ENCODE measurements at regions of chr6 and their contacts with region 1.

Region 1: GRCh38 chr6:36765594-36766398 is 68.2 kb downstream of the RAB44 start:
- DNase-seq: peak; percentile 61 to 95
- H3K4me3 ChIP-seq: no peak overlapping the region
- H3K27ac ChIP-seq: no peak overlapping the region
- H3K4me1 ChIP-seq: peaks cover 0 to 10% (median 1%) of the 10 kb centered on the region in 4 experiments; a peak in 4 of 7 replicates
- H3K27me3 ChIP-seq: no peaks in the 10 kb centered on the region
- CTCF ChIP-seq: peak; percentile 94 to 97 (median 96)
- EP300 ChIP-seq: no peak
- POLR2A ChIP-seq: no peak
- RAD21 ChIP-seq: peak; percentile 98 to 99

Region 2: GRCh38 chr6:36788768-36789167 is 23.0 kb after region 1 on chr6:
- CTCF ChIA-PET with region 1: interaction called, 231 read pairs
- POLR2A ChIA-PET with region 1: interaction called, 4 read pairs
- DNase-seq: no peak
- H3K4me3 ChIP-seq: no peak overlapping the region
- H3K27ac ChIP-seq: no peak overlapping the region
- H3K4me1 ChIP-seq: peaks cover 8 to 35% (median 19%) of the 10 kb centered on the region in 4 experiments
- H3K27me3 ChIP-seq: no peaks in the 10 kb centered on the region
- CTCF ChIP-seq: no peak
- EP300 ChIP-seq: no peak
- POLR2A ChIP-seq: no peak
- RAD21 ChIP-seq: no peak

Region 3: GRCh38 chr6:36809941-36810803 is 44.4 kb after region 1 on chr6:
- CTCF ChIA-PET with region 1: interaction called, 47 read pairs
- POLR2A ChIA-PET with region 1: no interaction called
- DNase-seq: no peak
- H3K4me3 ChIP-seq: no peak overlapping the region
- H3K27ac ChIP-seq: no peak overlapping the region
- H3K4me1 ChIP-seq: peaks cover 1 to 11% (median 3%) of the 10 kb centered on the region in 4 experiments; a peak in 4 of 7 replicates
- H3K27me3 ChIP-seq: no peaks in the 10 kb centered on the region; a peak in 2 of 7 replicates
- CTCF ChIP-seq: peak; percentile 44 to 48 (median 44)
- EP300 ChIP-seq: no peak
- POLR2A ChIP-seq: no peak
- RAD21 ChIP-seq: peak; percentile 61 to 67

Region 4: DNA sequence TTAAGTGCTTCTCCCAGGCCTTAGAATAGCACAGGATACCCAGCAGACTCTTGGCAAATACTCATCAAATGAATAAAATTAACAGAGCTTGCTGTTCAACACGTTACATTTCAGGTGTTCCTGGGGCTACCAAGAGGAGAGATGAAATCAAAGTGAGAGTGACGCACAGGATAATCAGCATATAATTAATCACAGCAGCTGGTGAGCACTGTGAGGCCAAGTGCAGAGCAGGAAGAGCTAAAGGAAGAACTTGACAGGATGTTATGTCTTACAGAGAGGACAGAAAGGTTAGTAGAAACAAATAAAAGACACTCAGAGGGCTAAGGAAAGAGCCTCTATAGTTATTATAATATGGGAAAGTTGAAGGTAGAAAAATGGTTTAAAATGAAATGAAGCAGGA is 100.0 kb after region 1 on chr6:
- CTCF ChIA-PET with region 1: interaction called, 11 read pairs
- POLR2A ChIA-PET with region 1: no interaction called
- DNase-seq: no peak
- H3K4me3 ChIP-seq: no peak overlapping the region
- H3K27ac ChIP-seq: no peak overlapping the region
- H3K4me1 ChIP-seq: no peaks in the 10 kb centered on the region
- H3K27me3 ChIP-seq: no peaks in the 10 kb centered on the region
- CTCF ChIP-seq: no peak
- EP300 ChIP-seq: no peak
- POLR2A ChIP-seq: no peak
- RAD21 ChIP-seq: no peak

Region 5: GRCh38 chr6:36885461-36886401 is 119.9 kb after region 1 on chr6 and contains the start of gene C6orf89:
- CTCF ChIA-PET with region 1: interaction called, 21 read pairs
- POLR2A ChIA-PET with region 1: no interaction called
- DNase-seq: peak; percentile 95 to 97
- H3K4me3 ChIP-seq: peak within 1 kb of the TSS; percentile 47 to 81 (median 70)
- H3K27ac ChIP-seq: peak within 1 kb of the TSS; percentile 24; the same call in 1 of the 2 replicates
- H3K4me1 ChIP-seq: no peaks in the 10 kb centered on the region; a peak in 1 of 7 replicates
- H3K27me3 ChIP-seq: no peaks in the 10 kb centered on the region
- CTCF ChIP-seq: peak; percentile 72 to 87 (median 82)
- EP300 ChIP-seq: 0 out of 3 replicates have a peak, but pooled peaks of 1 of the 2 experiments have one; percentile 10
- POLR2A ChIP-seq: no peak
- RAD21 ChIP-seq: peak; percentile 32 to 47; a peak in 3 of 4 replicates
- total RNA-seq, gene C6orf89: 11.6 and 12.3 TPM in 2 replicates